Right cardiac atrium (tissue), 5 donors: ENCODE measurements at regions of chr2 and their contacts with region 1.

Region 1: DNA sequence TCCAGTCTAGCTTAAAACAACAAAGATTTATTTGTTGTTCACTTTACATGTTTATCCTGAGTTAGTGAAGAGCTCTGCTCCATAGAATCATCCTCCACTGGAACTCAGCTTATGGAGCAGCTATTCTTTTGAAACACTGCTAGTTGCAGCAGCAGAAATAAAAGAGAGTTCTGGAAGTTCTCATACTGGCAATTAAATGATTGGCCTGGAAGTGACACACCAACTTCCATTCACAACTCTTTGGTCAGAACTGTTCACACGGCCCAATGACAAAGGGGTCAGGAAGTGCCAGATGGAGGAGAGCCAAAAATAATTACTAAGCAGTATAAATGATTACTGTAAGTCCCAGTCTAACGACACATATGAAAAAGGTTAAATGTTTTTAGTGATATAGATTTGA is 39.1 kb downstream of the FBXO11 start:
- DNase-seq: no peak
- ATAC-seq: peak; percentile 90 to 94
- H3K4me3 ChIP-seq: no peak overlapping the region
- H3K27ac ChIP-seq: no peak overlapping the region
- H3K4me1 ChIP-seq: peaks cover 2% of the 10 kb centered on the region
- H3K27me3 ChIP-seq: no peaks in the 10 kb centered on the region

Region 2: DNA sequence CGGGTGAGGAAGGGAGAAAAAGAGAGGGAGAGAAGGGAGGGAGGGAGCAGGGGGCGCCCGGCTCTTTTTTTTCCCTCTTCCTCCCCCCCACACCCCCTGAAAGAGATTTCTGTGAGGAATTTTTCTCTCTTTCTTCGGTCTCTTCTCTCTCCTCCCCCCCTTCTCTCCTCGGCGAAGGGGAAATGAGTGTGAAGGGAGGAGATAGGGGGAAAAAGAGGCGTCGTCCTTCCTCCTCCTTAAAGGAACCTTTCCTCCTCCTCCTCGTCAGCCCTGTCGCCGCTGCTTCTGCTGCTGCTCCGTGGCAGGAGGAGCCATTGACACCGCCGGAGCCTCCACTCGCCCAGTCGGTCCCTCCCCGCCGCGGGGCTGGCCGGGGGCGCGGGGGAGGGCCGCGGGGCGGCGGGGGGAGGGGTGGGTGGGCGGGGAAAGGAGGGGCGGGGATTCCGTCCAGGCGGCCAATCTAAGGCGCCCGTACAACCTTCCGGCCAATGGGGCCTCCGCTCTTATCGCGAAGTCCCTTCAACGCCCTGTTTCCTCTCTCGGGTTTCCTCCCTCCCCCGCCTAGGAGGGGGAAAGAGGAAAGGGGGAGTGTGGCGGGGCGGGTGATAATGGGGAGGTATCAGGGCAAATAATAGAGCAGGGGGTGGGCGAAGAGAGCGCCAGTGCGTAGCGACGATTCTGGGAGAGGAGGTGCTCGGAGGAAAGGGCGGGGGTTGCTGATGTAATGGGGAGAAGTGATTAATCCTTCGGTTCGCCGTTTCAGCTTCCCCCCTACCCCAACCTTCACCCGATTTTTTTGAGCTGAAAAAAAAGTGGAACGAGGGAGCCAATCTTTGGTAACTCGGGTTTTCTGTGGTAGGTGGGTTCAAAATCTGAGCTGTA is 39.2 kb after region 1 on chr2 and contains the start of gene FBXO11:
- intact Hi-C with region 1: loop called in 1 of 4 experiments (anchors 5 kb)
- DNase-seq: peak; percentile 97 to 98 (median 98)
- ATAC-seq: peak; percentile 97 to 98
- H3K4me3 ChIP-seq: peak within 1 kb of the TSS; percentile 92
- H3K27ac ChIP-seq: peak within 1 kb of the TSS; percentile 98
- H3K4me1 ChIP-seq: peaks cover 2% of the 10 kb centered on the region
- H3K27me3 ChIP-seq: no peaks in the 10 kb centered on the region
- total RNA-seq, gene FBXO11: 39.1 to 45.4 (median 42.1) TPM

Region 3: DNA sequence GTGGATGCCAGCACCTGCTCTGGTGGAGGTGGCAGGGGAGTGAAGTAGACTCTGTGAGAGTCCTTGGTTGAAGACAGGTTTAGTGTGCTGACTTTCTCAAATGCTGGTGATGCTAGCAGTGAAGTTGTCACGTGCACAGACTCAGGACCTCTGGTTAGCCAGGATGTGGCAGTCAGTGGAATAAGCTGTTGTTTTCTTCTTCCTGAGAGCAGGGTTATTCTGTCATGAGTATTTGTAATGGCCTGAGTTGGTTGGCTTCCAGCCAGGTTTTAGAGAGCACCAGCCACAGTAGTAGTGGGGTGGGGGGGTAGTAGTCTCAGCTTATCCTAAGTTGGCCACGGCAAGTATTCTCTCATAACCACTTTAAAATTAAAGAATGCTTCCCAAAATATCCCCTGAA is 277.6 kb after region 1 on chr2:
- intact Hi-C with region 1: no loop called
- DNase-seq: no peak
- ATAC-seq: no peak
- H3K4me3 ChIP-seq: no peak overlapping the region
- H3K27ac ChIP-seq: no peak overlapping the region
- H3K4me1 ChIP-seq: peaks cover 1% of the 10 kb centered on the region
- H3K27me3 ChIP-seq: no peaks in the 10 kb centered on the region